Activated CD4-positive, alpha-beta T cell treated with anti-CD3 and anti-CD28 coated beads for 36 hours (primary cell): ENCODE measurements at regions of chr2 and their contacts with region 1.

Region 1: DNA sequence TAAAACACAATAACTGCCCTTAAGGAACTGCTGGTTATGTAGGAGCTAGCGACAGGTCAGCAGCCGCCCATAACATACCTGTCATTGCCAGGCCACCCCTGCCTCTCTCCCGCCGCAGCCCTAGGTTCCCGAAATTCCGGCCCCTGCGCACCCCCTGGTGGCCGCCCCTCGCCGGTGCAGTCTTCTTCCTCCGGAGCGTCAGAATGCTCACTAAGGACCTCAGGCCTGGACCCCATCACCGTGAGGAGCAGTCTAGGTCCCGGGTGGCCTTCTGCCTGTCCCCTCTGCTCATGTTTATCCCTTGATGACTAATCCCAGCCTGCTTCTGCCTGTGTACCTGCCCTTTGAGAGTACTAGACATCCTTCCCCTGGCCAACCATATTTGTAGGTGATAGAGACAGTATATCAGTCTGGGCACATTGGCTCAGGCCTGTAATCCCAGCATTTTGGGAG is 115.7 kb upstream of the SLC1A4 start:
- DNase-seq: peak; percentile 89
- ATAC-seq: peak; percentile 93
- H3K4me3 Mint-ChIP-seq: no peak overlapping the region
- H3K27ac Mint-ChIP-seq: no peak overlapping the region
- H3K4me1 Mint-ChIP-seq: peaks cover 3% of the 10 kb centered on the region
- H3K27me3 Mint-ChIP-seq: no peaks in the 10 kb centered on the region

Region 2: GRCh38 chr2:64045938-64046337 is 827.6 kb before region 1 on chr2:
- CTCF ChIA-PET with region 1: no interaction called
- POLR2A ChIA-PET with region 1: no interaction called
- intact Hi-C with region 1: loop called (anchors 5 kb)
- DNase-seq: no peak
- ATAC-seq: no peak
- H3K4me3 Mint-ChIP-seq: no peak overlapping the region
- H3K27ac Mint-ChIP-seq: no peak overlapping the region
- H3K4me1 Mint-ChIP-seq: peaks cover 10% of the 10 kb centered on the region
- H3K27me3 Mint-ChIP-seq: no peaks in the 10 kb centered on the region

Region 3: DNA sequence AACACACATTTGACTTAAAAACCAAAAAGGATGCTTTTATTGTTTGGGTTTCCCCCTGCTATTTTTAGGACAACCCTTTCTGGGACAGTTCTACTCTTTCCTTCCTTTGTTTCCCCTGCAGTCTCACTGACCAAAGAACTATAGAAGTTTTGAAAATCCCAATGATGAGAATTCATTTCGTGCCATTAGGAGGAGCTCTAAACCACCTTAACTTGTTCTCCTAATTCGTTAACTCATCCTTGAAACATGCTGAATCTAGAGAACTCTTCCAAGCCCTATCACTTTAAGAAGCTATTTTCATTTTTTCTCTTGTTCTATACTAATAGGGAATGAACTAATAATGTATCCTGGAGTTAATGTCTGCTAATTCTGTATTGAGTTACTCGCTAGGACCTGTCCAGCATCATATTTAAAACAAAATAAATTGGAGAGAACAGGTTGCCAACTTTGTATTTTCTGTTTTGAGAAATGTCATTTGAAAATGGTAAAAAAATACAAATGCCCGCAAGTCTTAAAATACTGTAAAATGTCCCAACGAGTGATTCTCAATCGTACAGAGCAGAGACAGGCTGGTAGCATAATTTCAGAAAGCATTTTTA is 286.5 kb before region 1 on chr2:
- CTCF ChIA-PET with region 1: interaction called, 8 read pairs
- POLR2A ChIA-PET with region 1: no interaction called
- intact Hi-C with region 1: loop called (anchors 1 to 2 kb)
- DNase-seq: no peak
- ATAC-seq: peak; percentile 44
- H3K4me3 Mint-ChIP-seq: no peak overlapping the region
- H3K27ac Mint-ChIP-seq: no peak overlapping the region
- H3K4me1 Mint-ChIP-seq: peaks cover 20% of the 10 kb centered on the region
- H3K27me3 Mint-ChIP-seq: no peaks in the 10 kb centered on the region

Region 4: DNA sequence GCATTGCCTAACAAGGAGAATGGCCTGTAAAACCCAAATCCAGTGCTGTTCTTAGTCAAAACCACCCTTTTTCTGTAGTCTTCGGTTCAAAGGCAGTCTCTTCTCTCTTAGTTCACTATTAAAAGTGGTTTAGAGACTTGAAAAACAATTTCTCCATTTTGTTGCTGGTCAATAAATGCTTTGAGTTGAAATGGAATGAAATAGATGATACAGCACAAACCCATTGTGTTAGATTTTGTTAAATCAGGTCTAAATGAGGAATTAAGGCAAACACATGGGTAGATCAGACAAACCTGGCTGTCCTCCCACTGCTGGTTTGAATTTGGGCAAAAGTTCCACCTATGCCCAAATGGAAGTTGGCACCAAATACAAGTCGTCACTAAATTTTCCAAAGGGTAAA is 69.7 kb before region 1 on chr2:
- CTCF ChIA-PET with region 1: no interaction called
- POLR2A ChIA-PET with region 1: no interaction called
- intact Hi-C with region 1: no loop called
- DNase-seq: no peak
- ATAC-seq: no peak
- H3K4me3 Mint-ChIP-seq: no peak overlapping the region
- H3K27ac Mint-ChIP-seq: no peak overlapping the region
- H3K4me1 Mint-ChIP-seq: peaks cover 21% of the 10 kb centered on the region
- H3K27me3 Mint-ChIP-seq: no peaks in the 10 kb centered on the region

Region 5: GRCh38 chr2:65450393-65450792 is 576.9 kb after region 1 on chr2:
- CTCF ChIA-PET with region 1: no interaction called
- POLR2A ChIA-PET with region 1: no interaction called
- intact Hi-C with region 1: no loop called
- DNase-seq: no peak
- ATAC-seq: no peak
- H3K4me3 Mint-ChIP-seq: no peak overlapping the region
- H3K27ac Mint-ChIP-seq: no peak overlapping the region
- H3K4me1 Mint-ChIP-seq: no peaks in the 10 kb centered on the region
- H3K27me3 Mint-ChIP-seq: peaks cover 17% of the 10 kb centered on the region